Dendritic cell treated with granulocyte-macrophage colony-stimulating factor and Interleukin-4, amounts not matched to agents 40 ng/mL and 50 ng/mL, for 4 days (primary cell): ENCODE measurements at regions of chr15 and their contacts with region 1.

Region 1: GRCh38 chr15:33132722-33133345 is 61.7 kb downstream of the FMN1 start:
- H3K4me3 Mint-ChIP-seq: no peak overlapping the region
- H3K27ac Mint-ChIP-seq: no peak overlapping the region
- H3K4me1 Mint-ChIP-seq: peaks cover 31% of the 10 kb centered on the region
- H3K27me3 Mint-ChIP-seq: no peaks in the 10 kb centered on the region

Region 2: DNA sequence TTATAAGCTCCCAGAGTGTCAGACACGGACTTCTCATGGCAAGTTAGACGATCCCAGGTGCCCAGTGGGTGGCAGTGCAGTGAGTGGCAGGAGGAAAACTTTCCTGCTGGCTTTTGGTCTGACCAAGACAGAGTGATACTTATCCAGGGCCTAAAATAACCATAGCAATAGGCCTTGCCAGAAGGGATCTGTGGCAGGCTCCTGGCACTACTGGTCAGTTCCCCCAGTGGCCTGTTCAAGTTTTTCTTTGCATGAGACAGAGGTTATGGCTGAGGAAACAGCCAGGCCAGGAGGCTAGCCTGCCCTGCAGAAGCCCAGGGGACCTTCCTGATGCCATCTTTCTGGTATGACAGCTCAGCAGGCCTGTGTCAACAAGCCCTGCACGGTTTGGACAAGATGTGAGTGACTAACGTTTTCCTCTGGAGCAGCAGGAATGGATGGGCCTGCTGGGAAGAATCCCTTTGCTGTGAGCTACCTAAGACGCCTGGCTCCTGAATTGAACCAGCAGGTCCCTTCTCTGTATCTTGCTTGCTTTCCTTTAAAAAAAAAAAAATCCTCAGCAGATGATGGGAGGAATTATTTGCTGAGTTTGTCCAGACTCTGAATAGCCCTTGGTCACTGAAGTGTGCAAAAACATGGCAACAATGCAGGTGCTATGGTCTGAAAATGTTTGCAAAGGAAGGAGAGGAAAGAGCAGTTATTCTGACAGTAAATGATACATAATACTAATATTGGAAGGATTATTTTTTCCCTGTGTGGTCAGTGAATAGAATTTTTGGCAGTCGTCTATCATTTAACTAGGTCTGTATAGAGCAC is 473.3 kb before region 1 on chr15:
- intact Hi-C with region 1: loop called (anchors 2 kb)
- H3K4me3 Mint-ChIP-seq: no peak overlapping the region
- H3K27ac Mint-ChIP-seq: no peak overlapping the region
- H3K4me1 Mint-ChIP-seq: peaks cover 5% of the 10 kb centered on the region
- H3K27me3 Mint-ChIP-seq: no peaks in the 10 kb centered on the region

Region 3: DNA sequence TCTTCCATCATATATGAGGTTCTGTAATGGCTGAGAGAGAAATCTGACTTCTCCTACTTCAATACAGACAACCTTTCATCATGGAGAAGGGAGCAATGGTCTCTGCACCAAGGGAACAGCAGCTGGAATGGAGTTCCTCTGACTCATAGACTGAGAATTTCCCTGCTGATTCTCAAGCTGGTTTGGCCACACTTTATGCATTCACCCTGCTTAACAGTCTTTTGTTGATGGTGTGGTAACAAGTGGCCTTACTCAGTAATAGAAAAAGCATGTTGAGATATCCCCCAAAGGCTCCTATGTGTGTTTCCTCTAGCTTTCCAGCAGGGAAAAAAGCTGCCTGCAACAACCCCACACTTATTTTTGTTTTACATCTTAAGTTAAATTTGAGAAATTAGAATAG is 276.9 kb before region 1 on chr15:
- intact Hi-C with region 1: loop called (anchors 10 kb)
- H3K4me3 Mint-ChIP-seq: no peak overlapping the region
- H3K27ac Mint-ChIP-seq: no peak overlapping the region
- H3K4me1 Mint-ChIP-seq: peaks cover 6% of the 10 kb centered on the region
- H3K27me3 Mint-ChIP-seq: no peaks in the 10 kb centered on the region

Region 4: DNA sequence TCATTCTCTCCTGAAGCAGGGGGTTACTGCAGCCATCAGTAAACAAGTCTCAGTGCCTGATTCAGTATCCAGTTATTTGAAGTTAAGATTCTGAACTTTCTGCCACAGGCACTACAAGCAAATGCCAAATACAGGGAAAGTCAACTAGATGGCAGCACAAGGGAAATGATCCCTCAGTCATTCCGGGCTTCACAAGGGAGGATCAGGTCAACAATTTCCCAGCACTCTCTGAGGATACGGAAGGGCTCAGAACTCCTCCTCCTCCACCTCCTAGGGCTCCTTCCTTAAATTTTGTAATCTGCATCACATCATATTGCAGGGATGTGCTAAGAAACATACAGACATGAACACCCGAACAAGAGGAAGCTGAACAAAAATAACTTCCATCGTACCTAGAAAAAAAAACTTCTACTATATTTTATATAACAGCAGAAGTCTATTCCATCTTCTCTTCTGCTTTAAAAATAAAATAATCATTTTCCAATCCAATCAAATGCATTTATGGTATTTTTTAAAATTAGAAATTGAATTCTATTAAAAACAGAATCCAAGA is 125.5 kb before region 1 on chr15:
- intact Hi-C with region 1: loop called (anchors 5 kb)
- H3K4me3 Mint-ChIP-seq: no peak overlapping the region
- H3K27ac Mint-ChIP-seq: no peak overlapping the region
- H3K4me1 Mint-ChIP-seq: peaks cover 20% of the 10 kb centered on the region
- H3K27me3 Mint-ChIP-seq: no peaks in the 10 kb centered on the region

Region 5: GRCh38 chr15:33021806-33022389 is 110.9 kb before region 1 on chr15:
- intact Hi-C with region 1: loop called (anchors 1 kb)
- H3K4me3 Mint-ChIP-seq: no peak overlapping the region
- H3K27ac Mint-ChIP-seq: peak overlapping the region; percentile 74
- H3K4me1 Mint-ChIP-seq: peaks cover 10% of the 10 kb centered on the region
- H3K27me3 Mint-ChIP-seq: no peaks in the 10 kb centered on the region

Region 6: GRCh38 chr15:33043636-33044035 is 89.2 kb before region 1 on chr15:
- intact Hi-C with region 1: no loop called
- H3K4me3 Mint-ChIP-seq: no peak overlapping the region
- H3K27ac Mint-ChIP-seq: no peak overlapping the region
- H3K4me1 Mint-ChIP-seq: no peaks in the 10 kb centered on the region
- H3K27me3 Mint-ChIP-seq: no peaks in the 10 kb centered on the region

Region 7: DNA sequence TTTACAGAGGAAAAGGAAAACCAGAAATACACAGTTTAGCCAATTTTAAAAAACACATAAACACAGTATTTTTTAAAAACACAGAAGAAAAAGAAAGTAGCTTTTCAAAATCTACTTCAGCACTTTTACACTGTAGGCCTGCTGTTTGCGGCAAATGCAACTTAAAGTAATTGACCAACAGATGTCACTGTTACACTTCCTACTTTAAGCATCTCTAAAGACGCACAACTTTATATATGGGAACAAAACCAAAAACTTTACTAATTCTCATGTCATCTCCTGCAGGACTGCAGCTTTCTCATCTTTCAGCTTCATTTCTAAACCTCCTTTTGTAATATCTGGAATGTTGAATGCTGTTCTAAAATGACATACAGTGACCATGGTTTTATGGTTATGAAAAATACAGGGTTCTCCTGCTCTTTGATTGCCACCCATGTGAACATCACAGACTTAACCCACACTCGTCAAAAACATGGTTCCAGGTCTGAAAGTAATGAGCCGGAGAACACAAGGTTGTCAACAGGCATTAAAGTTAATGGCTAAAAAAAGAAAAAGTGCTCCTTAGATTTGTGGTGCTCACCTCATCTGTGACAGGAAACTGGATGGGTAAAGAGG is 46.2 kb before region 1 on chr15:
- intact Hi-C with region 1: loop called (anchors 1 kb)
- H3K4me3 Mint-ChIP-seq: no peak overlapping the region
- H3K27ac Mint-ChIP-seq: no peak overlapping the region
- H3K4me1 Mint-ChIP-seq: peaks cover 6% of the 10 kb centered on the region
- H3K27me3 Mint-ChIP-seq: no peaks in the 10 kb centered on the region

Region 8: GRCh38 chr15:33188641-33189257 is 55.9 kb after region 1 on chr15:
- intact Hi-C with region 1: loop called (anchors 10 kb)
- H3K4me3 Mint-ChIP-seq: no peak overlapping the region
- H3K27ac Mint-ChIP-seq: peak overlapping the region; percentile 41
- H3K4me1 Mint-ChIP-seq: peaks cover 19% of the 10 kb centered on the region
- H3K27me3 Mint-ChIP-seq: peaks cover 21% of the 10 kb centered on the region

Region 9: GRCh38 chr15:33581032-33581431 is 448.2 kb after region 1 on chr15:
- intact Hi-C with region 1: no loop called
- H3K4me3 Mint-ChIP-seq: no peak overlapping the region
- H3K27ac Mint-ChIP-seq: no peak overlapping the region
- H3K4me1 Mint-ChIP-seq: no peaks in the 10 kb centered on the region
- H3K27me3 Mint-ChIP-seq: no peaks in the 10 kb centered on the region

Region 10: DNA sequence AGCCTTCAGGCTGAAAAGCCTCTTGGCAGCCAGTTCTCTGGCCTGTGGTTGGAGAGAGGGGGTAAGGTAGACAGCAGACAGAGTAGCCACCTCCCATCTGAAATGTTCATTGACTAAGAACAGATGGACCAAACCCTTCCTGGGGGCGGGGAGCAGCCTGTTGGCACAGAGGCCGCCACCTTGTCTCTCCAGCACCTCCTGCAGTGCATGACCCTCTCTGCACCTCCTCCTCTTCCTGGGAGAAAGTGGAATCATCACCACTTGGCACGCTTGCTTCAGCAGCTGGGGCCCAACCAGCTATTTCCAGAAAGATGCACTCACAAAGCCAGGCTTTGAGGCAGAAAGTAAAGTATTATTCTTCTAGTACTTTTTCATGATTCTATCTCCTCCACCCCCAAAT is 522.0 kb after region 1 on chr15:
- intact Hi-C with region 1: no loop called
- H3K4me3 Mint-ChIP-seq: no peak overlapping the region
- H3K27ac Mint-ChIP-seq: no peak overlapping the region
- H3K4me1 Mint-ChIP-seq: no peaks in the 10 kb centered on the region
- H3K27me3 Mint-ChIP-seq: no peaks in the 10 kb centered on the region